ENCODE measurements at regions of chr7 and their contacts with region 1.

Region 1: GRCh38 chr7:20598459-20599309 is 16.8 kb upstream of the ABCB5 start:
- DNase-seq: peak; percentile 84
- ATAC-seq: peak; percentile 83
- H3K4me3 ChIP-seq: peak overlapping the region; percentile 69
- H3K27ac ChIP-seq: peak overlapping the region; percentile 87
- H3K4me1 ChIP-seq: peaks cover 27% of the 10 kb centered on the region
- H3K27me3 ChIP-seq: no peaks in the 10 kb centered on the region
- CTCF ChIP-seq: peak; percentile 93

Region 2: DNA sequence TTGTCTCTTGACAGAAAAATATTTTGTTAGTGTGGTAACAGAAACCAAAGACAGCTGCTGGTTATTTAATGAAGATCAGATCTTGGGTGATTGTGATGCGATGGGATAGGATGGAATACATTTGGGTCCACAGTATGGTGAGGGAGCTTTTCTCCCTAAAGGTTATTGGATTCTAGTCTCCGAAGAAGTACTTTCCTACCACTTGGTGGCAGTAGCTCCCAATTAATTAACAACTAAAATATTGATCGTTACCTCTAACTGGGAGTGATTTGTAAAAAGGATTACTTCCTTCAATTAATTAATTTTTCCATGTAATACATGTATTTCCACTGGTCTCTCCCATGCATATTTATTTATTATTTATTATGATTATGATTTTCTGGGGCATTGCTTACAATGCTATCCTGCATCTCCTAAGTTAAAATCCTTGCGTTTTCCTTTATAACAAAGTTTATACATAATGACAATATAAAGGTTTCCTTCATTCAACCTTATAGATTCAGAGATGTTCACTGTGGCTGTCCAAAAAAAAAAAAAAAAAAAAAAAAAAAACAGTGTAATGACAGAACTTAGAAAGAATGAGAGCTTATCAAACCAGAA is 850.8 kb before region 1 on chr7:
- CTCF ChIA-PET with region 1: interaction called, 32 read pairs
- POLR2A ChIA-PET with region 1: no interaction called
- intact Hi-C with region 1: loop called (anchors 1 kb)
- DNase-seq: peak; percentile 81
- ATAC-seq: peak; percentile 78
- H3K4me3 ChIP-seq: no peak overlapping the region
- H3K27ac ChIP-seq: no peak overlapping the region
- H3K4me1 ChIP-seq: peaks cover 8% of the 10 kb centered on the region; the same call in 1 of the 2 replicates
- H3K27me3 ChIP-seq: no peaks in the 10 kb centered on the region
- CTCF ChIP-seq: peak; percentile 75

Region 3: DNA sequence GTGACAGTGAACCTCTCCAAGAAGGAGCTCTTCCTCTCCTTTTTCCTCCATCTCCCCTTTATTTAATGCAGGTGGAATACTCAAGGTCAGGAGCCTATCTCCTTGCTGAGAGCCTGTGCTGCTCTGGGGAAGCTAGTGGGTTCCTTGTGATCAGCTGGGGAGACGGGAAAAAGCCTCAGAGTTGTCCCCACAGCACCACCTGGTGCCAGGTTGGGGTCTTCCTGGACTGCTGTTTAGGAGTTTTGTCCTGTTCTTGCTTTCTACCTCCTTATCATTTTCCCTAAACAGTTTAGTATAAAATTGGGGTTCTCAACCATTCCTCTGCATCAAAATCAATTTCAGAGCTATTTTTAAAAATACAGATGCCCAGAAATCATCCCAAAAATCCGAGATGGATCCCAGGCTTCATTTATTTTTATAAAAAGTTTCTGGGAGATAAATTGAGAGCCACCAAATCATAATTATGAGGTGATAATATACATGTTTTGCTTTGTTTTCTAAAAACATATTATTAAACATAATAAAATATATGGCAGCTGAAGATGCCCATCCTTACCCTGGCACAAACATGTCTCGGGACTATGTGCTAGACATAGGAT is 425.8 kb before region 1 on chr7:
- CTCF ChIA-PET with region 1: interaction called, 10 read pairs
- POLR2A ChIA-PET with region 1: no interaction called
- intact Hi-C with region 1: loop called (anchors 1 kb)
- DNase-seq: peak; percentile 74
- ATAC-seq: peak; percentile 99
- H3K4me3 ChIP-seq: no peak overlapping the region
- H3K27ac ChIP-seq: no peak overlapping the region
- H3K4me1 ChIP-seq: no peaks in the 10 kb centered on the region
- H3K27me3 ChIP-seq: no peaks in the 10 kb centered on the region
- CTCF ChIP-seq: peak; percentile 77

Region 4: DNA sequence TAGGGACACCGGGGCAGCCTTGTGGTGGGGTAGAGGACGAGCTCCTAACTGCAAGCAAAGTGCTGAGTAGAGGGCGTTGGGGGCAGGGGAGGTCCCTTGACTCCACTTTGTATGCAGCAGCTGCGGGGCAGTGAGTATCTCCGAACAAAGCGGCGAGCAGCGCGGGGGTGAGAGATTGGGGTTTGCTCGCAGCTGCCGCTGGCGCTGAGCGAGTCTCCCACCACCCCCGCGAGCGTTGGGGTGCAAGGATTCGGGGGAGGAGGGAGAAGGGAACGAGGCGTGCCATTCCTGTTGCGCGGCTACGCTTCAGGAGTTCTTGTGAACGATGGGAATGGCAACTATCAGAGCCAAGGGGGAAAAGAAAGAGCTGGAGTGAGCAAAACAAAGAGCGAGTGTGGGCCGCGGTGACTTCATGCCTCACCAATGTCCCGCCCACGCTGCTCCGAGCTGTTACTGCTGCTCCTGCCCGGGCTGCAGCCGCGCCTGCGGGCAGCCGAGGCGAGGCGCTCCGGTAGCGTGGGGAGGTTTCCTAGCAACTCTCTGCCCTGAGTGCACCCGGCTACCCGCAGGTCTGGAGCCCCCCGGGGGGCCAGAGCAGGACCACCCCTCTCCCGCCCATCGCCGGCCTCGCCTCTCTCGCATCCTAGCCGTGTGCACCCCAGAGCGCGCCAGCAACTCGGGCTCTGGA is 268.3 kb before region 1 on chr7 and contains the start of gene ITGB8:
- CTCF ChIA-PET with region 1: interaction called, 11 read pairs
- POLR2A ChIA-PET with region 1: interaction called, 3 read pairs
- intact Hi-C with region 1: loop called (anchors 1 kb)
- DNase-seq: peak; percentile 79
- ATAC-seq: peak; percentile 67
- H3K4me3 ChIP-seq: peak within 1 kb of the TSS; percentile 89
- H3K27ac ChIP-seq: peak within 1 kb of the TSS; percentile 85
- H3K4me1 ChIP-seq: peaks cover 26% of the 10 kb centered on the region
- H3K27me3 ChIP-seq: no peaks in the 10 kb centered on the region
- CTCF ChIP-seq: no peak
- total RNA-seq, gene ITGB8: 13.9 and 14.0 TPM in 2 replicates

Region 5: GRCh38 chr7:20539201-20539600 is 59.5 kb before region 1 on chr7:
- CTCF ChIA-PET with region 1: interaction called, 10 read pairs
- POLR2A ChIA-PET with region 1: no interaction called
- intact Hi-C with region 1: loop called (anchors 1 kb)
- DNase-seq: peak; percentile 68
- ATAC-seq: peak; percentile 74; the same call in 1 of the 2 replicates
- H3K4me3 ChIP-seq: no peak overlapping the region
- H3K27ac ChIP-seq: no peak overlapping the region
- H3K4me1 ChIP-seq: peaks cover 9% of the 10 kb centered on the region; the same call in 1 of the 2 replicates
- H3K27me3 ChIP-seq: no peaks in the 10 kb centered on the region
- CTCF ChIP-seq: peak; percentile 72

Measured in PC-3 (cell line).